Vagina (tissue), 2 donors: ENCODE measurements at regions of chr19 and their contacts with region 1.

Region 1: GRCh38 chr19:48588670-48589399 is 17.7 kb upstream of the SPACA4 start:
- DNase-seq: no peak
- H3K4me3 ChIP-seq: peak overlapping the region; percentile 34 to 46
- H3K27ac ChIP-seq: no peak overlapping the region
- H3K4me1 ChIP-seq: peaks cover 24% of the 10 kb centered on the region
- H3K27me3 ChIP-seq: no peaks in the 10 kb centered on the region
- CTCF ChIP-seq: peak; percentile 60 to 92 (median 81)
- POLR2A ChIP-seq: no peak

Region 2: DNA sequence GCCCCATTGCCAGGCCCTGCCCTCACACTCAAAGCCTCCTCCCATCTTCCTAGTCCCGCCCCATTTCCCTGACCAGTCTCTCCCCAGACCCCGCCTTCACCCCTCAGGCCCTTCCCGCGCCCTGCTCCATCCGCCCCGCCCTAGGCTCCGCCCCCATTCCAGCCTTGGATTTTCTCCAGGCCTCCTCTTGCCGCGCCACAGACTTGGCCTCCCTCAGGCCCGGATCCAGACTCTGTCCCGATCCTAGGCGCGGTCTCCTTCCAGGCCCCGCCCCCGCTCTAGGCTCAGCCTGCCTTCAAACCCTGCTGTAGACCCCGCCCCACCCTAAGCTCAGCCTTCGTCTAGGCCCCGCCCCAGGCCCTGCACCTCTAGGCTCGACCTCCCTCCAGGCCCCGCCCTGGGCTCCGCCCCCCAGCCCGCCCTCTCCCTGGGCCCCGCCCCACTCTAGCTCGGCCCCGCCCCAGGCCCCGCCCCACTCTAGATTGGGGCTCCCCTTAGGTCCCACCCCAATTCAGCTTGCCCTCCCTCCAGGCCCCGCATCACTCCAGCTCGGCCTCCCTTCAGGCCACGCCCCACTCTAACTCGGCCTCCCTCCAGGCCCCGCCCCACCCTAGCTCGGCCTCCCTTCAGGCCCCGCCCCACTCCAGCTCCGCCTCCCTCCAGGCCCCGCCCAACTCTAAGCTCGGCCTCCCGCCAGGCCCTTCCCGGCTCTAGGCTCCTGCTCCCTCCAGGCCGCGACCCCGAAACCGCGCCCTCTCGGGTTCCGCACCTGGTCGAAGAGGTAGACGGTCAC is 95.7 kb before region 1 on chr19:
- intact Hi-C with region 1: loop called (anchors 5 kb)
- DNase-seq: peak in 1 of 2 donors; percentile 95
- H3K4me3 ChIP-seq: peak overlapping the region; percentile 43 to 63
- H3K27ac ChIP-seq: peak overlapping the region; percentile 63
- H3K4me1 ChIP-seq: peaks cover 50% of the 10 kb centered on the region
- H3K27me3 ChIP-seq: no peaks in the 10 kb centered on the region
- CTCF ChIP-seq: no peak
- POLR2A ChIP-seq: peak in 1 of 2 donors; percentile 52

Region 3: DNA sequence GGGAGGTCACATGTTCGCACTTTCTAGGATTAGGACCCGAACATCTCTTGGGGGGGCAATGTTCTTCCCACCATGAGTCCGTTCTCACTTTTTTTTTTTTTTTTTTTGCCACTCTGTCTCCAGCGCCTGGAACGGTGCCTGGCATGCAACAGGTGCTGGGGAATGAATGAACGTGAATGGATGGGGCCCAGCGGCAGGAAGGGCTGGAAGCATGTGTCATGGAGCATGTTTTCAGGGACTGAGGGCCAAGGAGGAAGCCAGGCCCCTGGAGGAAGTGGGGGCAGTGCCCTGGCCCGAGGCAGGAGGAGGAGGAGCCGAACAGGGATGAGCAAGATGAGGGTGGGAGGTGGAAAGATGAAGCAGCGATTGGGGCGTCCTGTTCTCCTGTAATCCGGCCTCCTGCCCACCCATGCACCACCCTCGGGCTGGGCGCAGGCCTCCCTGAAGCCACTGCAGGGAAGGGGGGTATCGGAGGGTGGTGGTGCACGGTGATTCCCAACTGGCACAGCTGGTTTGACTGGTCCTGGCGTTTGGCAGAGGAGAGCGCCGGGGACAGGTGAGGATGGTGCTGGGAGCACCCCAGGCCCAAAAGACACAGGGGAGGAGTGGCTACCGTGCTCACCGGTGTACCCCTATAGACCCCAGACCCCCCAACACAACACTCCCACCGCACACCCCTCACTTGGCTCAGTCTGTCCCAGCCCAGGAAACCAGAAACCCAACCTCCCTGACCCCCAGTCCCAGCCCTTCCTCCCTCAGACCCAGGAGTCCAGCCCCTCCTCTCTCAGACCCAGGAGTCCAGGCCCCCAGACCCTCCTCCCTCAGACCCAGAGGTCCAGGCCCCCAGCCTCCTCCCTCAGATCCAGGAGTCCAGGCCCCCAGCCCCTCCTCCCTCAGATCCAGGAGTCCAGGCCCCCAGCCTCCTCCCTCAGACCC is 45.4 kb before region 1 on chr19:
- intact Hi-C with region 1: no loop called
- DNase-seq: no peak
- H3K4me3 ChIP-seq: no peak overlapping the region
- H3K27ac ChIP-seq: no peak overlapping the region
- H3K4me1 ChIP-seq: no peaks in the 10 kb centered on the region
- H3K27me3 ChIP-seq: no peaks in the 10 kb centered on the region
- CTCF ChIP-seq: no peak
- POLR2A ChIP-seq: no peak